Dorsolateral prefrontal cortex (tissue), 120 donors: ENCODE measurements at regions of chr19 and their contacts with region 1.

Region 1: GRCh38 chr19:49451430-49452181 is at the start of gene PIH1D1:
- DNase-seq: peak; percentile 87 to 100 (median 97)
- H3K4me3 ChIP-seq: peak within 1 kb of the TSS; percentile 70 to 98 (median 86)
- H3K27ac ChIP-seq: peak within 1 kb of the TSS; percentile 82 to 100 (median 98)
- H3K27me3 ChIP-seq: no peaks in the 10 kb centered on the region
- CTCF ChIP-seq: peak in 51 of 56 donors; percentile 15 to 65 (median 45)
- total RNA-seq, gene PIH1D1: 48.9 to 115 (median 70.7) TPM

Region 2: GRCh38 chr19:49361438-49362047 is 90.1 kb before region 1 on chr19:
- intact Hi-C with region 1: no loop called
- DNase-seq: no peak
- H3K4me3 ChIP-seq: peak overlapping the region in 58 of 59 donors; percentile 15 to 68 (median 49)
- H3K27ac ChIP-seq: peak overlapping the region in 40 of 59 donors; percentile 3 to 85 (median 63)
- H3K27me3 ChIP-seq: peaks cover 0 to 52% (median 33%) of the 10 kb centered on the region in 45 donors
- CTCF ChIP-seq: no peak

Region 3: DNA sequence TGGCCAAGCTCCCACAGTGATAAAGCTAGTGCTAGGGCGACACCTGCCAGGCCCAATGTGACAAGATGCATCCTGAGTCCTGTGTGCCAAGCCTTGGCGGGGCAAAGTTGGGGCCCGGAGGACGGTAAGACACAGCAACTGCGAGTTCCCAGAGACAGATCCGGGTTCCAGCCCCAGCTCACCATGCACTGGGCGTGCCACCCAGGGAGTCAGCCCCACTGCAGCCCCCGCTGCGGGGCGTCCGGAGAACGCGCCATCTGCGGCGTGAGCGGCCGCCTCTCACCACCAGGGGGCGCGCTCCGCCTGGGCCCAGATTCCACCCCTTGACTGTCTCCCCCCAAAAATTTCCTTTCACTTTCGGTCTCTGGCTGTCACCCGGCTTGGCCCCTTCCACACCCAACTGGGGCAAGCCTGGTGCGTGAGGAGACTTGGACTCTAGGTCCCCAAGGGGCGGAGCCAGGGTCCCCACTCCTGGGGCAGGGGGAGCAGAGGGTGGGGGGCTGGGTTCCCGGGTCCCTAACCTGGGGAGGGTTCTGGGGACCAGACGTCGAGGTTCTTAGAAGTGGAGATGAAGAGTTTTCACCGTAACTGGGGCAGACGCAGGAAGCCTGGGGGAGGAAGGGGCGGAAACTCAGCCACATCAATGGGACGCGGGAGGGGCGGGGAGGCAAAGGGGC is 22.4 kb after region 1 on chr19 and contains the start of gene FLT3LG:
- intact Hi-C with region 1: loop called in 1 of 2 experiments (anchors 2 kb)
- DNase-seq: peak in 8 of 10 donors; percentile 14 to 77 (median 46)
- H3K4me3 ChIP-seq: peak within 1 kb of the TSS; percentile 49 to 89 (median 70)
- H3K27ac ChIP-seq: peak within 1 kb of the TSS in 51 of 59 donors; percentile 15 to 90 (median 70)
- H3K27me3 ChIP-seq: no peaks in the 10 kb centered on the region
- CTCF ChIP-seq: peak; percentile 90 to 100 (median 98)
- total RNA-seq, gene FLT3LG: 1.7 to 11.9 (median 4.6) TPM

Region 4: DNA sequence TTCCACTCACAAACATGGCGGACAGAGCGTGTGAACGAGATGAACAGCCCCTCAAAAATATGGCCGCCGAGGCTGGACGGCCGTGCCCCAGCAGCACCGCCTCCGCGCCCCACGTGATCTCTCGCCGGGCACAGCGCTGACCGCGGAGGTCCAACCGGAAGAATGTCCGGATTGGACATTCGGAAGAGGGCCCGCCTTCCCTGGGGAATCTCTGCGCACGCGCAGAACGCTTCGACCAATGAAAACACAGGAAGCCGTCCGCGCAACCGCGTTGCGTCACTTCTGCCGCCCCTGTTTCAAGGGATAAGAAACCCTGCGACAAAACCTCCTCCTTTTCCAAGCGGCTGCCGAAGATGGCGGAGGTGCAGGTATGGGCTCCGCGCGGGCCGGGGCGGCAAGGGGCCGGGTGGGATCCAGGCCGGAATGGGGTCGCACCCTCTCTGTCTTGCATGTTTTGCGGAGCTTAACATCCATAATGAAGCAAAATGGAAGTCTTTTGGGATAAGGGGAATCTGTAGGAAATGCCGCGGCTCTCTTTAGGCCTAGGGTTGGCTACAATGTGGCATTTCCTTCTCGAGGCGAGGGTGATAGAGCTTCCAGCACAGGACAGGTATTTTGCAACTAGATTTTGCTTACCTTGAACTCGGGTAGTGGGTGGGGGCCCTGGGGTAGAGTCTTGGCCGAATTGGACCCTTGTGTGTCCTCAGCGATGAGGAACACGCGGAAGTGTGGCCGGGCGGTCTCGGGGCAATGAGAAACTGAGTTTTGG is 35.9 kb after region 1 on chr19 and contains the start of gene RPL13A:
- intact Hi-C with region 1: loop called (anchors 2 to 5 kb)
- DNase-seq: peak; percentile 97 to 100 (median 99)
- H3K4me3 ChIP-seq: peak within 1 kb of the TSS; percentile 72 to 100 (median 95)
- H3K27ac ChIP-seq: peak within 1 kb of the TSS; percentile 21 to 99 (median 95)
- H3K27me3 ChIP-seq: no peaks in the 10 kb centered on the region
- CTCF ChIP-seq: peak in 30 of 56 donors; percentile 10 to 65 (median 26)
- total RNA-seq, gene RPL13A: 564 to 1,173 (median 771) TPM

Region 5: DNA sequence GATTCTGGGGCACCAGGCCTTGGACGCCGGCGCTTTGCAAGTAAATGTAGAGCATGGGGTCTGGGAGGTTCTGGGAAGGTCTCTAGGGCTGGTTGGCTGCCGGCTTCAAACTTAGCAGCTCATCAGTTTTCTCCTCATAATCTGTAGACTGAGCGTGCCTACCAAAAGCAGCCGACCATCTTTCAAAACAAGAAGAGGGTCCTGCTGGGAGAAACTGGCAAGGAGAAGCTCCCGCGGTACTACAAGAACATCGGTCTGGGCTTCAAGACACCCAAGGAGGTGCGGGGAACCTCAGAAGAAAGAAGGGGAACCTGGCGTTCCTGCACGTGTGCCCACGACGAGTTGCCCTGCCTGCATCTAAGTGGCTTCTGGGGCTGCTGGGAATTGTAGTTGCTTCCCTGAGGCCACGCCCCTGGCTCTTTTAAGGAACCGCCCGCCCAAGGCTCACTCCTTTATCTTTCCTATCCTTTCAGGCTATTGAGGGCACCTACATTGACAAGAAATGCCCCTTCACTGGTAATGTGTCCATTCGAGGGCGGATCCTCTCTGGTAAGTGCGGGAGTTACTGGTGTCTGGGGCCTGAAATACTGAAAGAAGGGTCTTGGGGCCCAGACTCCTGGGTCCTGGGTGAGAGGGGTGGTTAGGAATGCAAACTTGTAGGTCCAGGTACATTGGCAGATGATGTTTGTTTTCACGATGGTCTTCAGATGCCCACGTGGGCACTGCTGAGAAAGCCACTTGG is 45.6 kb after region 1 on chr19:
- intact Hi-C with region 1: loop called in 1 of 2 experiments (anchors 2 kb)
- DNase-seq: peak in 2 of 10 donors; percentile 47 to 51
- H3K4me3 ChIP-seq: peak overlapping the region; percentile 55 to 100 (median 92)
- H3K27ac ChIP-seq: peak overlapping the region in 56 of 59 donors; percentile 83 to 99 (median 96)
- H3K27me3 ChIP-seq: no peaks in the 10 kb centered on the region
- CTCF ChIP-seq: no peak